Activated T-helper 1 cell treated with anti-CD3 and anti-CD28 coated beads, Interleukin-12 subunit alpha, Interleukin-12 subunit beta, Interleukin-2, Interleukin-4 antibody, amounts not matched to agents 30 ng/mL and 10 ng/mL and 1 ng/mL, durations not matched to agents 14 hours and 24 hours and 36 hours (primary cell): ENCODE measurements at regions of chr14 and their contacts with region 1.

Region 1: DNA sequence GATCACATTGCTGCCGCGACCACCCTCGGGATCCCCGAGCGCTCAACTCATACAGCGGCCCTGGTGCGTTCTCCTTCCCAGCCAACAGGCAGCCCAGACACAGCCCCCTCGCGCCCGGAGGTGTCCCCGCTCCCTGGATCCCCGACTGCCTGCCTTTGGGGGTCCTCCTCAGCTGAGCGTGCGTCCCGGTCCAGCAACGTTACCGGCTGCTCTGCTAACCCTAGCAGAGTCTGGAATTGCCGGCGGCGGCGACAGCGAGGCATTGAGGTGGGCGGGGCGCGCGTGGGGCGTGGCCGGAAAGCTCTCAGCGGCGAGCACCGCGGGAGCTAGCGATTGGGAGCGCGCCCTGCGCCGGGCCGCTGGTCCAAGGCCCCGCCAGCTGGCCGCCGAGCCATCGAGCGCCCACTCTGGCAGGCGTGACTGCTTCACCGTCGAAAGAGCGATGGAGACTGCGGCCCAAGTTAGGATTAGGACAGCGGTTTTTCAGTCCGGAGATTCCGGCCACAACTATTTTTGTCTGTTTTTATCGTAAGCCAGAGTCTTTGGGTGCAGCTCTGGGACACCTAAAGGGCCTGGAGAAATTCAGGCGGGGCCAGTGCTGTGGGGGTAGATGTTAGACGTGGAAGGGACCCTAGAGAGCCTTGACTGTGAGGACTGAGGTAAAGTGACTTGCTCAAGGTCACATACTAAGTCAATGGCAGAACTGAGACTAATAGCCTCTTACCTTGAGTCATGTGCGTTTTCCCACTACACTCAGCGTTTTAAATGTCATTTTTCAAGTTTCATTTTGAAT is at the start of gene HEATR5A:
- DNase-seq: peak; percentile 92
- H3K4me3 Mint-ChIP-seq: peak within 1 kb of the TSS; percentile 98
- H3K27ac Mint-ChIP-seq: peak within 1 kb of the TSS; percentile 90
- H3K4me1 Mint-ChIP-seq: peaks cover 26% of the 10 kb centered on the region
- H3K27me3 Mint-ChIP-seq: peaks cover 2% of the 10 kb centered on the region
- total RNA-seq, gene HEATR5A: 26.4 and 31.0 TPM in 2 replicates

Region 2: DNA sequence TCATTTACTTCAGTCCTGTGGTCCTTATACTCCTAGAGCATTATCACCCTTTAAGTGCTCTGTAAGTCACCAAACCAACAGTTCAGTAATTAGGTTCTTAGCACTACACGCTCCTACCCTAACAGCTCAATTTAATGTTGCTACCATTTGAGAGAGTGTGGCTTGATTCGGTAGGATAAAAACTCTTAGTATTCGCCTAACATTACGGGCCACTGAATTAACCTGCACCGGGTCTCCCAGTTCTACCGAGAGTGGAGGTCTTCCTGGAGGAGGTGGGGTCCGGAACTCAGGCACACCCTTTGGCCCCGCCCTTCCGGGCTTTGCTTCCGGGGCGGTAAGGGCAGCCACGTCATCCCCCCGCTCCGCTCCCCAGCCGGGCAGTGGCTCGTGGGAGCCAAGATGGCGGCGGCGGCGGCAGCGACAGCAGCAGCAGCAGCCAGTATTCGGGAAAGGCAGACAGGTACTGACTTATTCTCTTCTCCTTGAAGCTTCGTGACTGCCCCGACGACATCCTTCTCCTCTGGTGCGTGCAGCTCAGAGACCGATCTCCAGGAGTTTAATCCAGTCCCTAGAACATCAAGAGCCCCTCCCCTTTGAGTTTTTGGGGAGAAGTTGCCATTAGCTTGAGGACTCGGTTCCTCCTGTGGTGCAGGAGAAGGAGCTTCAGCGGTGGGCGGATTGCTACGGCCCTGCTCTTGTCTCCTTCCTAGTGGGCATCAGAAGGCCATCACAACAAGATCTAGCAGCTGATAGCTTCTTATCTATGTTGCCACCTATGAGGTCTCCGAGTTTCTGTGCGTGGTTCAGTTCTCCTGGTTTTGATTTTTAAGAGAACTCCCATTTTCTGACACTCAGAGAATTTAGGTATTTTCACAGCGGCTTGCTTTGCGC is 798.3 kb before region 1 on chr14 and contains the start of gene SCFD1:
- intact Hi-C with region 1: loop called (anchors 10 kb)
- DNase-seq: peak; percentile 94
- H3K4me3 Mint-ChIP-seq: peak within 1 kb of the TSS; percentile 99
- H3K27ac Mint-ChIP-seq: peak within 1 kb of the TSS; percentile 98
- H3K4me1 Mint-ChIP-seq: peaks cover 56% of the 10 kb centered on the region
- H3K27me3 Mint-ChIP-seq: no peaks in the 10 kb centered on the region
- total RNA-seq, gene SCFD1: 73.1 and 77.3 TPM in 2 replicates

Region 3: DNA sequence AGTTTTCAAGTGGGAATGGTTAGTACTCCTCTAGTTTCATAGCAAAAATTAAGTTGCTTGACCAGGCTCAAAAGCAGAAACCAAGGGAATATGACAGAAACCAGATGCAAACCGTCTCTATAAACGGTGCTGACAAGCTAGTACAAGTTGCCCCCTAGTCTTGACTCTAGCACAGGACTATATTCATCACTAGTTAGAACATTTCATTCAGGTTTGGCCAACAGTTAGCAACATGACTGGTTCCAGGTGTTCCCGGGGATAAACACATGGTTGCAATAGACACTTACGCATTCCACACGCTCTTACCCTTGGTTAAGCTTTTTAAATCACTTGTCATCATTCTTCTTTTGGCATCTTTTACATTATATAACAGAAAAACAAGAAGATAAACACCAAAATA is 694.8 kb before region 1 on chr14:
- intact Hi-C with region 1: no loop called
- DNase-seq: no peak
- H3K4me3 Mint-ChIP-seq: no peak overlapping the region
- H3K27ac Mint-ChIP-seq: no peak overlapping the region
- H3K4me1 Mint-ChIP-seq: peaks cover 8% of the 10 kb centered on the region
- H3K27me3 Mint-ChIP-seq: no peaks in the 10 kb centered on the region

Region 4: DNA sequence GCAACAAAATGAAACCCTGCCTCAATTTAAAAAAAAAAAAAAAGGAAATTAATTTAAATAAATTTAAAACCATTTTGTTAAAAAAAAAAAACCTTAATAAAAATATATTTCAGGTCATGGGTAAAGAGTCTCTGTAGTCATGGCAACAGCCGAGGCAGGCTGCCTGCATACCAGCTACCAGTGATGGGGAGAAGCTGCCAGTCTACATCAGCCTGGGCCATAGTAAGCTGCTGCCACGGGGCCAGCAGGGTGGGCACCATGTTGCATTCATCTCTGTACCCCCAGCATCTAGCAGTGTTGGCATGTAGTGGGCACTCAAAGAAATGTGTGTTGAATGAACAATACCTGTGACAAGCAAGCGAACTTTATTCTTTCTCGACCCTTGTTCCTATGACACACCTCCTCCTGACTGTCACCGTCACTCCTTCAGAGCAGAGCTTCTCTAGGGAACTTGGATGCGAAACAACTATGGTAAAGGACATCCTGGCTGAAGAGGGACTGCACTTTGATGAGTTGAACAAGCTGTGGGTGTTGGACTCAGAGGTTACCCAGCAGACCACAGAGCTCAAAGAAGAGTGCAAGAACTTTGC is 402.4 kb before region 1 on chr14:
- intact Hi-C with region 1: no loop called
- DNase-seq: no peak
- H3K4me3 Mint-ChIP-seq: no peak overlapping the region
- H3K27ac Mint-ChIP-seq: no peak overlapping the region
- H3K4me1 Mint-ChIP-seq: peaks cover 23% of the 10 kb centered on the region
- H3K27me3 Mint-ChIP-seq: no peaks in the 10 kb centered on the region

Region 5: GRCh38 chr14:31380106-31380505 is 40.4 kb before region 1 on chr14:
- intact Hi-C with region 1: loop called (anchors 1 kb)
- DNase-seq: no peak
- H3K4me3 Mint-ChIP-seq: no peak overlapping the region
- H3K27ac Mint-ChIP-seq: no peak overlapping the region
- H3K4me1 Mint-ChIP-seq: peaks cover 12% of the 10 kb centered on the region
- H3K27me3 Mint-ChIP-seq: no peaks in the 10 kb centered on the region

Region 6: GRCh38 chr14:31388687-31389413 is 31.7 kb before region 1 on chr14:
- intact Hi-C with region 1: loop called (anchors 1 kb)
- DNase-seq: no peak
- H3K4me3 Mint-ChIP-seq: peak overlapping the region; percentile 7
- H3K27ac Mint-ChIP-seq: peak overlapping the region; percentile 93
- H3K4me1 Mint-ChIP-seq: peaks cover 41% of the 10 kb centered on the region
- H3K27me3 Mint-ChIP-seq: no peaks in the 10 kb centered on the region

Region 7: GRCh38 chr14:31400031-31400638 is 20.4 kb before region 1 on chr14:
- intact Hi-C with region 1: loop called (anchors 1 kb)
- DNase-seq: no peak
- H3K4me3 Mint-ChIP-seq: peak overlapping the region; percentile 17
- H3K27ac Mint-ChIP-seq: peak overlapping the region; percentile 72
- H3K4me1 Mint-ChIP-seq: peaks cover 32% of the 10 kb centered on the region
- H3K27me3 Mint-ChIP-seq: no peaks in the 10 kb centered on the region

Region 8: DNA sequence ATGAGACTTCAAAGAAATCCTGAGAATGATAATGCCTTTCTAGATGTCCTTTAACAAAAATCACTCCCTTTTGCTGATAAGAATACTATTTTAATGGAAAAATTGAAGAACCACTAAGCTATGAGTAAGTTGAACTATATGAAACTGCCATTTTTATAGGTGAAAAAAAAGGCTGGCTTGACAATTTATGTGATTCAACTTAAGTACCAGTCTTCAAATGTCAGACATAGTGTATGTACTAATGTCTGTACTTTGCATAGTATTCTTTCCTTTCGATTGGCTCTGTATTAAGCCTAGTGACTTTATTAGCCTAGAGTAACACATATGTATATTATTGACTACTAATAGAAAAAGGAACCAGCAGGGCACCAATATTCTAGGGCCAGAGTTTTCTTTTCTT is 12.1 kb before region 1 on chr14:
- intact Hi-C with region 1: loop called (anchors 1 kb)
- DNase-seq: no peak
- H3K4me3 Mint-ChIP-seq: no peak overlapping the region
- H3K27ac Mint-ChIP-seq: no peak overlapping the region
- H3K4me1 Mint-ChIP-seq: peaks cover 8% of the 10 kb centered on the region
- H3K27me3 Mint-ChIP-seq: no peaks in the 10 kb centered on the region